Activated CD4-positive, alpha-beta T cell treated with anti-CD3 and anti-CD28 coated beads, Interleukin-2, amount 10 ng/mL, durations not matched to agents 24 days and 14 days (primary cell): ENCODE measurements at regions of chr22 and their contacts with region 1.

Region 1: DNA sequence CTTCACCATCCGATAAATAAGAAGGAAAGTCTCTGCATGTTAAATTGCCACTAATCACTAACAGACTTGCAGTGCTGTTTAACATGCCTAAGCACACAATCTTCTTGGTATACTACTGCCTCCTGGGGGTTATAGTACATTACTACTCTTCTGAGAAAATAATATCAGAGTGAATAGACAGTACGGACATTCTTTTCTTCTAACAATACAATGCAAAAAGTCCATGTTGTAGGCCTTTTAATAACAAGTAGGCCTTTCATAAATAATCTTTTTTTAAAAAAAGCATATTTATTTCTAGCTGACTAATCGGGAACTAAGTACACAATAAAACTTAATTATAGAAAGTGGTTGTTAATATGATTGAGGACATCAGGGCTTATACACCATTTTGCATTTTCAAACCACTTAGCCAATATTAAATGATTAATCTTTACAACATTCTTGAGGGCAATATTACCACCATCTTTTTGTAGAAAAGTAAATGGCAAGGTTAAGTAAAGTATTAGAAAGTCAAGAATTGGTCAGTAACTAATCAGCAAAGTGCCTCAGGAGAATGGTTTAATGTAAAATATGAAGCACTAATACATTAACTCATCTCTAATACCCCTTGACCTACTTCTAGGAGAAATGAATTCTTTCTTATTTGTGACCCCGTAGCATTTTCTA is 84.7 kb downstream of the TTC28 start:
- DNase-seq: no peak
- H3K4me3 Mint-ChIP-seq: no peak overlapping the region
- H3K27ac Mint-ChIP-seq: no peak overlapping the region
- H3K4me1 Mint-ChIP-seq: no peaks in the 10 kb centered on the region
- H3K27me3 Mint-ChIP-seq: peaks cover 28% of the 10 kb centered on the region

Region 2: GRCh38 chr22:28019881-28020871 is 574.8 kb before region 1 on chr22:
- intact Hi-C with region 1: loop called (anchors 1 kb)
- DNase-seq: peak; percentile 89
- H3K4me3 Mint-ChIP-seq: no peak overlapping the region
- H3K27ac Mint-ChIP-seq: no peak overlapping the region
- H3K4me1 Mint-ChIP-seq: peaks cover 2% of the 10 kb centered on the region
- H3K27me3 Mint-ChIP-seq: no peaks in the 10 kb centered on the region

Region 3: DNA sequence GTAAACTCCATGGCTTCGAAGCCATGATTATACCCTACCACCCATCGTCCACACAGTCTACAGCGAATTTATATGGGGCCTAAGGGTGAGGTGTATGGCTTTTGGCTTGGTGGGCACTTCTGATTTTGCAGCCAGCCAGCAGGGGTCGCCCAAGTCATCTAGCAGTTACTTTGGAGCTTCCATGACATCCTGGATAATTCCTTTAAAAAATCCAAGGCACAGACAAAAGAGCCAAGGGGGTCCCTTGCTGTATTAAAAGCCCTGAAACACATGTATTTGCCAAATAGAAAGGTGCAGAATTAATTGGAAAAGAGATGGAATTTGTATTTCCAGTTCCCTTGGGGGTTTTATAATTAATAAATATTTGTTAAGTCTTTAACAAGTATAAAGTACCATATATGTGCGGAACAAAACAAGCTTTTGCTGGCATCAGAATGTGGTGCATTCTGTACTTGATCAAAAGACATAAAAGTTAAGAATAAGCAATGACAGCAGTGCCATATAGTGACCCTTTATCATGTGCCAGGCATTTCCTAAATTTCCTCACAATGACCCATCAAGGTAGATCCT is 543.1 kb before region 1 on chr22:
- intact Hi-C with region 1: loop called (anchors 1 kb)
- DNase-seq: peak; percentile 72
- H3K4me3 Mint-ChIP-seq: no peak overlapping the region
- H3K27ac Mint-ChIP-seq: no peak overlapping the region
- H3K4me1 Mint-ChIP-seq: no peaks in the 10 kb centered on the region
- H3K27me3 Mint-ChIP-seq: no peaks in the 10 kb centered on the region

Region 4: GRCh38 chr22:28247667-28248363 is 347.1 kb before region 1 on chr22:
- intact Hi-C with region 1: loop called (anchors 10 kb)
- DNase-seq: no peak
- H3K4me3 Mint-ChIP-seq: no peak overlapping the region
- H3K27ac Mint-ChIP-seq: no peak overlapping the region
- H3K4me1 Mint-ChIP-seq: no peaks in the 10 kb centered on the region
- H3K27me3 Mint-ChIP-seq: peaks cover 4% of the 10 kb centered on the region

Region 5: DNA sequence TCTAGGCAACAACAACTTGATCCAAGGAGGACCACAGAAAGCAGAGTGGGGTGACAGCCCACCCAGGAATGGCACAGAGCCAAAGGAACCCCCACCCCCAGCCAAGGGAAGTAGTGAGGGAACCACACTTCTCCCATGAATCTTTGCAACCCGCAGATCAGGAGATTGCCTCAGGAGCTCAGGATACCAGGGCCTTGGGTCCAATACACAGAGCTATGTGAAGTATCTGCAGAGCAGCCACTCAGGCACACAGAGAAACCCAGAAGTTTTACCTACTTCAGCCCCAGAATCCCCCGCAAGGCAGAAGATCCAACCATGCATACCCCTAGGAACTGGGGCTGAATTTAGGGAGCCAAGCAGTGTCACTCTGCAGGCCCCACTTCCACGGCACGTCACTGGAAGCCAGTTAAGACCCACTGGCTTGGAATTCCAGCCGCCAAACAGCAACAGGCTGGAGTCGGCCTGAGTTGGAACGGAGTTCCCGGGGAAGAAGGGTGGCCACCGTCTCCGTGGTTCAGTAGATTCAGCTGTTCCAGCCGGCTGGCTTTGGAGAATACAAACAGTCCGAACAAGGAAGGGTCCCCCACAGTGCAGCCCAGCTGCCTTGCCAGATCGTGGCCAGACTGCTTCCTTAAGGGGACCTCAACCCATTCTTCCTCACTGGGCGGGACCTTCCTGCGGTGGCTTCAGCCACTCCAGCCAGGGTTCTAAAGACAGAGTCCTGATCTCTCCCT is 89.3 kb before region 1 on chr22:
- intact Hi-C with region 1: no loop called
- DNase-seq: no peak
- H3K4me3 Mint-ChIP-seq: no peak overlapping the region
- H3K27ac Mint-ChIP-seq: no peak overlapping the region
- H3K4me1 Mint-ChIP-seq: no peaks in the 10 kb centered on the region
- H3K27me3 Mint-ChIP-seq: peaks cover 10% of the 10 kb centered on the region